Naive thymus-derived CD4-positive, alpha-beta T cell (primary cell): ENCODE measurements at regions of chr6 and their contacts with region 1.

Region 1: DNA sequence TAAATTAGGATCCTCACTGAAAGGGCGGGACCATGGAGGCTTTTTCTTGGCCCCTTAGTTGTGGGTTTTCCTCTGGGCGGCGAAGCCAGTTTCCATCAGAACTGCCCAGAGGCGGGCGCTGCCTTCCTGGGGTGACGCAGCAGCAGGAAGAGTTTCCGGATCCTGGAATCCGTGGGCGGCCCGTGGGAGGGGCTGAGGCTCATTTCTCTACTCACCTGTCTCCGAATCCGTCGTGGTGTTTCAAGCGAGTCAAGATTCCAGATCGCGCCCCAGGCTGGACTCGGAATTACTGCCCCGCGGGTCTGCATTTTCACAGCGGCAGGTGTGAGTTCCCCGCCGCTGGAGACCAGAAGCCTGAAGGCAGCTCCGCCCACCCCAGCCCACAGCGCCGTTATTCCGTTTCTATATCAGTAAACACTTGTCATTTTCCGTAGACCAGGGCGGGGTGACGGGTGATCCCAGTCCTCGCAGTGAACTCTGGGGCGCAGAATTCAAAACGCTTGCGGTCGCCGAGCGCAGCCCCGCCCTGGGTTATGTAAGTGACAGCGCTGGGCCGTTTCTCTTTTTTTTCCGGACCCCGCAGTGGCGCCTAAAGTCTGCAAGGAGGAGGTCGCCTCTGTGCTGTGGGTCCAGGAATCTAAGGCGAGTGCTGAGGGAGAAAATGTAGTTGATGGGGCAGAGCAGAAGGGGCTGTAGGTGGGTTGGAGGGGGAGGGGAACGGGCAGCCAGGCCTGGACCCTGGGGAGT is 27.2 kb upstream of the POU5F1 start:
- DNase-seq: peak; percentile 78 to 98 (median 96)
- ATAC-seq: peak; percentile 88
- H3K4me3 ChIP-seq: peak overlapping the region; percentile 82
- H3K4me3 Mint-ChIP-seq: peak overlapping the region; percentile 84 to 99 (median 89)
- H3K27ac ChIP-seq: peak overlapping the region; percentile 100
- H3K27ac Mint-ChIP-seq: peak overlapping the region; percentile 82 to 100 (median 97)
- H3K4me1 ChIP-seq: peaks cover 27 to 28% of the 10 kb centered on the region in 2 donors
- H3K4me1 Mint-ChIP-seq: peaks cover 47 to 69% (median 59%) of the 10 kb centered on the region in 7 donors
- H3K27me3 ChIP-seq: no peaks in the 10 kb centered on the region
- H3K27me3 Mint-ChIP-seq: peaks cover 0 to 3% (median 0%) of the 10 kb centered on the region in 5 donors

Region 2: DNA sequence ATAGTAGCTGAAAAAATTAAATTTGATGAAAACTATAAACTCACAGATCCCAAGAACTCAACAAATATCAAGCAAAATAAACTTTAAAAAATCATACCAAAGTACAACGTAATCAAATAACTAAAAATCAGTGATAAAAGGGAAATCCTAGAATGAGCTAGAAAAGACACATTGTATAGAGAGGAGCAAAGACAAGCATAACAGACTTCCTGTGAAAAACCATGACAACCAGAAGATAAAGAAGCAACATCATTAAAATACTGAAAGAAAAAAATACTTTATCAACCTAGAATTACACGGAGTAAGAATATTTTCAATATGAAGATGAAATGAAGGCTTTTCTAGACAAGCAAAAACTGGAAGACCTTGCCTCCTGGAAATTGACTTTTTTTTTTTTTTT is 177.7 kb before region 1 on chr6:
- CTCF ChIA-PET with region 1: no interaction called
- POLR2A ChIA-PET with region 1: no interaction called
- intact Hi-C with region 1: no loop called
- DNase-seq: no peak
- ATAC-seq: no peak
- H3K4me3 ChIP-seq: no peak overlapping the region
- H3K4me3 Mint-ChIP-seq: no peak overlapping the region
- H3K27ac ChIP-seq: no peak overlapping the region
- H3K27ac Mint-ChIP-seq: no peak overlapping the region
- H3K4me1 ChIP-seq: no peaks in the 10 kb centered on the region
- H3K4me1 Mint-ChIP-seq: no peaks in the 10 kb centered on the region
- H3K27me3 ChIP-seq: no peaks in the 10 kb centered on the region
- H3K27me3 Mint-ChIP-seq: peaks cover 0 to 28% (median 17%) of the 10 kb centered on the region in 5 donors

Region 3: DNA sequence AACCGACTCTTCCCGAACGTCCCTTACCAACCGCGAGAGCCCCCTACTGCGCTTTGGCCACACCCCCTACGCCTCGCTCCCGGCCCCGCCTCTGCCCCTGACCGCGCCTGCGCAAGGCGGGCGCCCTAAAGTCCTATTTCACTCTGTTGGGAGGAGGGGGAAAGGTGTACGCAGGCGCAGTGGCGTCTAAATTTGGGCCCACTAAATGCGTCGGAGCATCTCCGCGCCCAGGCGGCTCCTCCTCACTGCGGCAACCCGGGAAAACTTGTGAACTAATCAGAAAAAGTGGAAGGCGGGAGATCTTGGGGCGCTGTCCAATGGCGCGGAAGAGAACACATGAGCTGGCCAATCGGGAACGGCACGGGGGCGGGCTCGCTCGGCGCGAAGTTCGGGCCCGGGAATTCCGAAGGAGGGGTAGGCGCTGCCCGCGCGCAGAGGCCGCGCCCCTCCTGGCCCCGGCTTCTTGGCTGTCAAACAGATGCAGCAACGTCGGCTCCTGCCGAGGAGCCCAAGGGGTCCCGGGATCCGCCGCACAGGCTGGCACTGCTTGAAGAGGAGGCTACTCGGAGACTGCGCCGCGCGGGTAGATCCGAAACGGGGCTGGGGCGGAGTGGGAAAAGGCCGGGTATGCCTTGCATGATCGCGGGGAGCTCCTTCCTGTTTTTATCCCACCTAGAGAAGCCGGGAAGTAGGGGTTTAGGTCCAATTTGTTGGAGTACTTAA is 39.4 kb before region 1 on chr6 and contains the start of gene TCF19:
- CTCF ChIA-PET with region 1: interaction called, 8 read pairs
- POLR2A ChIA-PET with region 1: interaction called, 26 read pairs
- intact Hi-C with region 1: loop called (anchors 1 kb)
- DNase-seq: peak; percentile 97 to 99 (median 98)
- ATAC-seq: peak; percentile 96
- H3K4me3 ChIP-seq: peak within 1 kb of the TSS; percentile 82
- H3K4me3 Mint-ChIP-seq: peak within 1 kb of the TSS; percentile 82 to 97 (median 91)
- H3K27ac ChIP-seq: peak within 1 kb of the TSS; percentile 82
- H3K27ac Mint-ChIP-seq: peak within 1 kb of the TSS; percentile 62 to 96 (median 89)
- H3K4me1 ChIP-seq: peaks cover 12 to 18% of the 10 kb centered on the region in 2 donors
- H3K4me1 Mint-ChIP-seq: peaks cover 21 to 56% (median 29%) of the 10 kb centered on the region in 7 donors
- H3K27me3 ChIP-seq: no peaks in the 10 kb centered on the region
- H3K27me3 Mint-ChIP-seq: peaks cover 0 to 2% (median 0%) of the 10 kb centered on the region in 5 donors
- total RNA-seq, gene TCF19: 4.3 to 78.9 (median 9.4) TPM

Region 4: GRCh38 chr6:31209137-31209536 is 11.4 kb after region 1 on chr6:
- CTCF ChIA-PET with region 1: no interaction called
- POLR2A ChIA-PET with region 1: interaction called, 28 read pairs
- intact Hi-C with region 1: no loop called
- DNase-seq: no peak
- ATAC-seq: no peak
- H3K4me3 ChIP-seq: no peak overlapping the region
- H3K4me3 Mint-ChIP-seq: no peak overlapping the region
- H3K27ac ChIP-seq: no peak overlapping the region
- H3K27ac Mint-ChIP-seq: peak overlapping the region in 2 of 9 donors; percentile 66 to 67
- H3K4me1 ChIP-seq: peaks cover 0 to 6% of the 10 kb centered on the region in 2 donors
- H3K4me1 Mint-ChIP-seq: peaks cover 13 to 21% (median 14%) of the 10 kb centered on the region in 7 donors
- H3K27me3 ChIP-seq: no peaks in the 10 kb centered on the region
- H3K27me3 Mint-ChIP-seq: no peaks in the 10 kb centered on the region

Region 5: DNA sequence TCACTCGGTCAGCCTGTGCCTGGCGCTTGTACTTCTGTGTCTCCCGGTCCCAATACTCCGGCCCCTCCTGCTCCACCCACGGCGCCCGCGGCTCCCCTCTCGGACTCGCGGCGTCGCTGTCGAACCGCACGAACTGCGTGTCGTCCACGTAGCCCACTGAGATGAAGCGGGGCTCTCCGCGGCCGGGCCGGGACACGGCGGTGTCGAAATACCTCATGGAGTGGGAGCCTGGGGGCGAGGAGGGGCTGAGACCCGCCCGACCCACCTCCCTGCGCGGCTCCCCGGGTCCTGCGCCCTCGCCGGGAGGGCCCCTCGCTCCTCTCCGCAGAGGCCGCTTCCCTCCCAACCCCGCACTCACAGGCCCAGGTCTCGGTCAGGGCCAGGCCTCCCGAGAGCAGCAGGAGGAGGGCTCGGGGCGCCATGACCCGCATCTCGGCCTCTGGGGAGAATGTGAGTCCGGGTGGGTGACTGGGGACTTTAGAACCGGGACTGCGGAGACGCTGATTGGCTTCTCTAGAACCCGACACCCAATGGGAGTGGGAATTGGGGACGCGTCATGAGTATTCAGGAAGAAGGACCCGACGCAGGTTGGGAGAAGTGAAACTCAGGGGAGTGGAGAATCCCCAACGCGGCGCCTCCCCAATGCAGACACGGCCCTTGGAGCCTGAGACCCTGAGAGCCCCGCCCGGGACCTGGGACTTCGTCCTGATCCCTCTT is 74.1 kb after region 1 on chr6 and contains the start of gene HLA-C:
- CTCF ChIA-PET with region 1: interaction called, 6 read pairs
- POLR2A ChIA-PET with region 1: interaction called, 50 read pairs
- intact Hi-C with region 1: loop called (anchors 1 kb)
- DNase-seq: peak; percentile 78 to 96 (median 92)
- ATAC-seq: peak; percentile 90
- H3K4me3 ChIP-seq: peak within 1 kb of the TSS; percentile 83
- H3K4me3 Mint-ChIP-seq: peak within 1 kb of the TSS; percentile 89 to 100 (median 94)
- H3K27ac ChIP-seq: peak within 1 kb of the TSS; percentile 99
- H3K27ac Mint-ChIP-seq: peak within 1 kb of the TSS; percentile 99 to 100 (median 100)
- H3K4me1 ChIP-seq: peaks cover 25 to 41% of the 10 kb centered on the region in 2 donors
- H3K4me1 Mint-ChIP-seq: peaks cover 53 to 69% (median 62%) of the 10 kb centered on the region in 7 donors
- H3K27me3 ChIP-seq: no peaks in the 10 kb centered on the region
- H3K27me3 Mint-ChIP-seq: peaks cover 0 to 19% (median 0%) of the 10 kb centered on the region in 5 donors
- total RNA-seq, gene HLA-C: 1,349 to 2,513 (median 1,489) TPM

Region 6: DNA sequence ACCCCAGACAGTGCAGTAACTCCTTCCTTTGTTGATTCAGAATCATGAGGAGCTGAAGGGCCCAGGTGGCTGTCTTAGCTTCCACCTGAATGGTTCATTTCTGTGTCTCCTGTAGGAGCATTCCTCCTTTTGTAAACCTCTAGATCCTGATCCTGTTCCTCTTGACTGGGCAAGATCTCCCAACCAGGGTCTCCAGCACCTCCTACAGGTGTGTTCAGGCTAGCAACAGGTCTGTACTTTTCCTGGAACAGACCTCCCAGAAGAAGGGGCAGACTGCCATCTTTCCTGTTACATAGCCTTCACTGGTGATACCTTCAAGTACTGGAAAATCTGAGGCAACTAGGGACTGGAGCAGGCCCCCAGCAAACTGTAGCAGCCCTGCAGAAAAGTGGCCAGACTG is 124.1 kb after region 1 on chr6:
- CTCF ChIA-PET with region 1: no interaction called
- POLR2A ChIA-PET with region 1: interaction called, 9 read pairs
- intact Hi-C with region 1: loop called in 1 of 2 experiments (anchors 1 kb)
- DNase-seq: no peak
- ATAC-seq: no peak
- H3K4me3 ChIP-seq: no peak overlapping the region
- H3K4me3 Mint-ChIP-seq: no peak overlapping the region
- H3K27ac ChIP-seq: no peak overlapping the region
- H3K27ac Mint-ChIP-seq: peak overlapping the region in 1 of 9 donors; percentile 37
- H3K4me1 ChIP-seq: no peaks in the 10 kb centered on the region
- H3K4me1 Mint-ChIP-seq: no peaks in the 10 kb centered on the region
- H3K27me3 ChIP-seq: no peaks in the 10 kb centered on the region
- H3K27me3 Mint-ChIP-seq: peaks cover 5 to 61% (median 38%) of the 10 kb centered on the region in 5 donors

Region 7: DNA sequence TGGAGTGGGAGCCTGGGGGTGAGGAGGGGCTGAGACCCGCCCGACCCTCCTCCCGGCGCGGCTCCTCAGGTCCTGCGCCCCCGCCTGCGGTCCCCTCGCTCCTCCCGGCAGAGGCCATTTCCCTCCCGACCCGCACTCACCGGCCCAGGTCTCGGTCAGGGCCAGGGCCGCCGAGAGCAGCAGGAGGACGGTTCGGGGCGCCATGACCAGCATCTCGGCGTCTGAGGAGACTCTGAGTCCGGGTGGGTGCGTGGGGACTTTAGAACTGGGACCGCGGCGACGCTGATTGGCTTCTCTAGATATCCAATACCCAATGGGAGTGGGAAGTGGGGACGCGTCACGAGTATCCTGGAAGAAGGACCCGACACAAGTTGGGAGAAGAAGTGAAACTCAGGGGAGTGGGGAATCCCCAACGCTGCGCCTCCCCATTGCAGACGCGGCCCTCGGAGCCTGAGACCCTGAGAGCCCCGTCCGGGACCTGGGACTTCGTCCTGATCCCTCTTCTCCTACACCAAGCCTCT is 159.3 kb after region 1 on chr6 and contains the start of gene HLA-B:
- CTCF ChIA-PET with region 1: interaction called, 7 read pairs
- POLR2A ChIA-PET with region 1: interaction called, 75 read pairs
- intact Hi-C with region 1: loop called (anchors 1 kb)
- DNase-seq: peak; percentile 65 to 91 (median 82)
- ATAC-seq: peak; percentile 90
- H3K4me3 ChIP-seq: peak within 1 kb of the TSS; percentile 68
- H3K4me3 Mint-ChIP-seq: peak within 1 kb of the TSS; percentile 80 to 100 (median 98)
- H3K27ac ChIP-seq: peak within 1 kb of the TSS; percentile 100
- H3K27ac Mint-ChIP-seq: peak within 1 kb of the TSS; percentile 99 to 100 (median 100)
- H3K4me1 ChIP-seq: peaks cover 28 to 33% of the 10 kb centered on the region in 2 donors
- H3K4me1 Mint-ChIP-seq: peaks cover 49 to 66% (median 58%) of the 10 kb centered on the region in 7 donors
- H3K27me3 ChIP-seq: no peaks in the 10 kb centered on the region
- H3K27me3 Mint-ChIP-seq: peaks cover 0 to 19% (median 0%) of the 10 kb centered on the region in 5 donors
- total RNA-seq, gene HLA-B: 5,136 to 7,364 (median 5,516) TPM

Region 8: GRCh38 chr6:31441365-31442267 is 243.9 kb after region 1 on chr6:
- CTCF ChIA-PET with region 1: no interaction called
- POLR2A ChIA-PET with region 1: no interaction called
- intact Hi-C with region 1: loop called (anchors 5 kb)
- DNase-seq: peak; percentile 69 to 85 (median 75)
- ATAC-seq: peak; percentile 98
- H3K4me3 ChIP-seq: no peak overlapping the region
- H3K4me3 Mint-ChIP-seq: peak overlapping the region in 2 of 10 donors; percentile 13 to 32
- H3K27ac ChIP-seq: no peak overlapping the region
- H3K27ac Mint-ChIP-seq: no peak overlapping the region
- H3K4me1 ChIP-seq: no peaks in the 10 kb centered on the region
- H3K4me1 Mint-ChIP-seq: peaks cover 0 to 6% (median 4%) of the 10 kb centered on the region in 7 donors
- H3K27me3 ChIP-seq: no peaks in the 10 kb centered on the region
- H3K27me3 Mint-ChIP-seq: peaks cover 28 to 74% (median 49%) of the 10 kb centered on the region in 5 donors